Heart right ventricle (tissue), 16 donors: ENCODE measurements at regions of chr17 and their contacts with region 1.

Region 1: GRCh38 chr17:41456208-41456607 is 11.0 kb downstream of the KRT32 start:
- DNase-seq: no peak
- ATAC-seq: no peak
- H3K4me3 ChIP-seq: no peak overlapping the region
- H3K27ac ChIP-seq: no peak overlapping the region
- H3K4me1 ChIP-seq: no peaks in the 10 kb centered on the region
- H3K27me3 ChIP-seq: peaks cover 0 to 27% (median 14%) of the 10 kb centered on the region in 7 donors
- CTCF ChIP-seq: peak in 2 of 9 donors; percentile 24 to 25

Region 2: GRCh38 chr17:41392278-41392677 is 63.9 kb before region 1 on chr17:
- intact Hi-C with region 1: loop called in 1 of 10 experiments (anchors 10 kb)
- DNase-seq: no peak
- ATAC-seq: no peak
- H3K4me3 ChIP-seq: no peak overlapping the region
- H3K27ac ChIP-seq: no peak overlapping the region
- H3K4me1 ChIP-seq: peaks cover 0 to 16% (median 12%) of the 10 kb centered on the region in 9 donors
- H3K27me3 ChIP-seq: peaks cover 0 to 16% (median 0%) of the 10 kb centered on the region in 7 donors
- CTCF ChIP-seq: no peak